Naive thymus-derived CD8-positive, alpha-beta T cell (primary cell): ENCODE measurements at regions of chr17 and their contacts with region 1.

Region 1: DNA sequence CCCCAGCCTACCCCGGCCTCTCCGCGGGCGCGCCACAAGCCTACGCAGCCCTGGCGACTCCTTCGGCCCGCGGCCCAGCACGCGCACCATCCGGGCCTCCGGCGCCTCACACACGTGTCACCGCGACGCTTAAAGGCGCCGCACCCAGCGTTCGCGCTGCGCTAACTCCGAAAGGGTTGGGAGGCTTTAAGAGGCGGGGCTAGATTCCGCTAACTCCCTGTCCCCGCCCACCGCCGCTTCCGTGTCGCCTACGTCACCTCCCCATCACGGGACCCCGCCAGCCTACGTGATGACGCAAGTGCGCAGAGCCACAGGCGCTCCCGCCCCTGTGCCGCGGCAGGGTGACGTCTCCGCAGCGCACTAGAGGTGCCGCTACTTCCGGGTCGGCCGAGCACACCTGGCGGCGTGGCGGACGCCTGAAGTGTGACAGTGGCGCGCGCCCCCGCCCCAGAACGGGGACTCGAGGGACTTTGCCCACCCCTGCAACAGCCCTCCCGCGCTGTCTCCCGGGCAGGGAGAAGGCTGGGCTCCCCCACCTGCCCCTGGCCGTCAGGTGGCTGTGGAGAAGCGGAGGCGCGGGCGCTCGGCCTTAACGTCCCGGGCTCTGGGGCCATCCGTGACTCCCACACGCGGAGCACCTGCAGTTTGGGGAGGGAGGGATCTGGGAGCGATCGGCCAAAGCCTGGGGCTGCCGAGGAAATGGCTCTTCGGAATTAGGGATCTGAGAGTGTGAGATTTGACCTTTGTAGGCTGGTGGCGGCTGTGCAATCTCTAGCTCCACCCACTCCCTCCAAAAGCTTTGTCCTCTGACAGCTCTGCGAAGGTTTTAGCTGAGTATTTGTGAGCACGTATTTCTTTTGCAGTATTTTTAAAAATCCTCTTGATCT is at the start of gene USP36:
- DNase-seq: peak; percentile 98 to 100 (median 100)
- ATAC-seq: peak; percentile 84 to 86
- H3K4me3 Mint-ChIP-seq: peak within 1 kb of the TSS; percentile 83 to 99 (median 95)
- H3K27ac Mint-ChIP-seq: peak within 1 kb of the TSS; percentile 95 to 99 (median 98)
- H3K4me1 Mint-ChIP-seq: peaks cover 24 to 63% (median 49%) of the 10 kb centered on the region in 4 donors
- H3K27me3 Mint-ChIP-seq: no peaks in the 10 kb centered on the region
- polyA plus RNA-seq, gene USP36: 27.5 to 45.1 (median 36.7) TPM

Region 2: GRCh38 chr17:78818932-78819331 is 22.0 kb before region 1 on chr17:
- POLR2A ChIA-PET with region 1: interaction called, 23 read pairs
- DNase-seq: peak; percentile 28 to 88 (median 76)
- ATAC-seq: peak; percentile 68 to 80
- H3K4me3 Mint-ChIP-seq: peak overlapping the region; percentile 49 to 83 (median 72)
- H3K27ac Mint-ChIP-seq: peak overlapping the region; percentile 63 to 98 (median 96)
- H3K4me1 Mint-ChIP-seq: peaks cover 15 to 60% (median 50%) of the 10 kb centered on the region in 4 donors
- H3K27me3 Mint-ChIP-seq: no peaks in the 10 kb centered on the region

Region 3: GRCh38 chr17:78852709-78853121 is 11.7 kb after region 1 on chr17:
- POLR2A ChIA-PET with region 1: no interaction called
- DNase-seq: no peak
- ATAC-seq: no peak
- H3K4me3 Mint-ChIP-seq: no peak overlapping the region
- H3K27ac Mint-ChIP-seq: peak overlapping the region in 1 of 10 donors; percentile 43
- H3K4me1 Mint-ChIP-seq: no peaks in the 10 kb centered on the region
- H3K27me3 Mint-ChIP-seq: no peaks in the 10 kb centered on the region

Region 4: DNA sequence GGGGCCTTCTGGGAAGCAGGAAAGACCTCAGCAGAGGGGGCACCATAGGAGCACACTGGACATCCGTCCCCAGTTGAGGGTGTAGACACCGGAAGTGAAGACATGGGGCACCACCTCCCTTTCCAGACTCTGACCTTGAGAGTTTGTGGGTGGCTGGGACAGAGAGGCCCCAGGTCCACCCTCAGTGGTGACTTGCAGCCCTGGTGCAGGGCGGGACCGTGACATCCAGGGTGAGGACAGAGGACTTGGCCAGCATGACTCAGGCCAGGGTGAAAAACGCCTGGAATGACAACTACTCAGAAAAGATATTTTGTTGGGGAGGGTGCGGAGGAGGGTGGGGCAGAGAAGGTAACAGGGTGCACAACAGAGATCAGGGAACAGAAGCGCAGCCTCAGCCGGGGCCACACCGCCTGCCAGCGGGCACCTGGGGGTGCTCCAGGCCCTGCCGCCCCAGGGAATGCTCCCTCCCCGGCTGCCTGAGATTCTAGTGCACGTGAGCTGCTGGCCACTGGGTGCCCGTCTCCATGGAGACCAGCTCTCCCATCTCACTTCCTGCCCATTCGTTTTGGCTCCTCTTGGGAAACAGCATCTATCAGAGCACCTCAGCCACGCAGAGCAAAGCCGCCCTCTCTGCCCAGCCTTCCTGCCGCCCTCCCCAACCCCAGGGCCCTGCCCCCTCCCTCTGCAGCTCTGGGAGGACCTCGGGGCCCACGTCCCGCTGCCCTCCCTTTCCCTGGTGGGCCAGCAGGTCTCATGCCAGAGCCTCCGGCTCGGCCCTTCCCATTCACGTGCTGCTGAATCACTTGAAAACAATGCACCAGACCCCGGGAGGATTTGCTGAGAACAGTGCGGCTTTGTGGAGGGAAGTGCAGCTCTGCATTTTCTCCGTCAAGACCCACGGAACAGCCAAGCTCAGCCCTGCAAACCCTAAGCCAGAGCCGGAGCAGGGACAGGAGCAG is 42.5 kb after region 1 on chr17:
- POLR2A ChIA-PET with region 1: no interaction called
- DNase-seq: peak in 4 of 10 donors; percentile 5 to 28 (median 19)
- ATAC-seq: peak; percentile 48 to 57
- H3K4me3 Mint-ChIP-seq: peak overlapping the region; percentile 3 to 77 (median 65)
- H3K27ac Mint-ChIP-seq: peak overlapping the region in 9 of 10 donors; percentile 41 to 86 (median 69)
- H3K4me1 Mint-ChIP-seq: peaks cover 17 to 40% (median 32%) of the 10 kb centered on the region in 4 donors
- H3K27me3 Mint-ChIP-seq: no peaks in the 10 kb centered on the region